Panc1 (cell line): ENCODE measurements at regions of chr17 and their contacts with region 1.

Region 1: DNA sequence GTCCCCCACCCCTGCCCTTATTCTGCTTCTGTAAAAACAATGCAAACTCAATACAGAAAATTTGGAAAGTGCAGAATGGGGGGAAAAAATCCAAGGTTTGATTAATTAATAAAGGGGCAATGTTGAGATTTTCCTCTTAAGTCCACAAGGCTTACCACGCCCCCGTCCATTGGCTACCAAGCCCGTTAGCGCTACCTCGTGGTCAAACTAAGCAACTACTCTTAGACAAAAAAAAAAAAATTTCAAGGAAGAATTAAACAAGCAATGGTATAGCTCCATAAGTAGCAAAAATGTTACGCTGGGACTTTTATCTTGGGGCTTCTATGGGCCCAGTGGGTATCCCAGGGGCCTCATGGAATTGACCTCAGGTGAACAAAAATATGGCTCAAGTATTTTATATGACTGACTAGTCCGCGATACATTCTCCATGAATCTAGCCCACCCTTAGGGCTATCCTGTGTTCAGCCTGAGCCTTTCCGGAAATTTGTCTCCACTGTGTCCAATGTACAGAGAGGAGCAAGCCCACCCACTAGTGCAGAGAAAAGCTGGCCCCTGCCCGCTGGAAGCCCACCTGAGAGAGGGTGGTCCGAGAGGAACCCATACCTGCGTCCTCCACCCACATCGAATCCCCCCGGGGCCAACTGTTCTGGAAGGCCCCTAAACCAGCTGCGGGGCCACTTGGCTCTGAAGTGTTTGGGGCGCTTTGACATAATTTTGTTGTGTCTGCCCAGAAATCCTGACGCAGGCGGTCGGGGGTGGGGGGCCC is 19.1 kb upstream of the TEX2 start:
- DNase-seq: no peak
- ATAC-seq: 0 out of 2 replicates have a peak, but pooled peaks have one; percentile 66
- H3K4me3 ChIP-seq: no peak overlapping the region
- H3K27ac ChIP-seq: no peak overlapping the region
- H3K4me1 ChIP-seq: no peaks in the 10 kb centered on the region
- H3K27me3 ChIP-seq: no peaks in the 10 kb centered on the region
- CTCF ChIP-seq: peak; percentile 83

Region 2: DNA sequence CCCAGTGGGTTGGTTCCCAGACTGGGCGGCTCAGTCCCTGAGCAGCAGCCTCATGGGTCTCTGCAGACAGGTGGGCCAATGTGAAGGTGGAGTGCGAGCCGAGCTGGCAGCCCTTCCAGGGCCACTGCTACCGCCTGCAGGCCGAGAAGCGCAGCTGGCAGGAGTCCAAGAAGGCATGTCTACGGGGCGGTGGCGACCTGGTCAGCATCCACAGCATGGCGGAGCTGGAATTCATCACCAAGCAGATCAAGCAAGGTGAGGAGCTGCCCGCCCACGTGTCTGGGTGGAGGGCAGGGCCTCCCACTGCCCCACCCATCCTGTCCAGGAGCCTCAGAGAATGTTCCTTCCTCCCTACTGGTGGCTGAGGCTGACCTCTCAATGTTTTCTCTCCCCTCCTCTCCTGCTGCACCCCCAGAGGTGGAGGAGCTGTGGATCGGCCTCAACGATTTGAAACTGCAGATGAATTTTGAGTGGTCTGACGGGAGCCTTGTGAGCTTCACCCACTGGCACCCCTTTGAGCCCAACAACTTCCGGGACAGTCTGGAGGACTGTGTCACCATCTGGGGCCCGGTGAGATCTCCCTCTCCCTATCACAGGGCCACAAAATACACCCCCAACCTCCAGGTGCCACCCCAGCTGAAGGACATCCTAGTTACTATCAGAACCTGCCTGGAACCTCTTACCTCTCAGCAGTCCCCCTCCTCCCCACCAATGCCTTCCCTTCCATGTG is 1610.4 kb before region 1 on chr17:
- CTCF ChIA-PET with region 1: interaction called, 14 read pairs
- POLR2A ChIA-PET with region 1: no interaction called
- in situ Hi-C with region 1: no loop called
- intact Hi-C with region 1: no loop called
- DNase-seq: no peak
- ATAC-seq: peak; percentile 30
- H3K4me3 ChIP-seq: no peak overlapping the region
- H3K27ac ChIP-seq: no peak overlapping the region
- H3K4me1 ChIP-seq: no peaks in the 10 kb centered on the region; the same call in 1 of the 2 replicates
- H3K27me3 ChIP-seq: no peaks in the 10 kb centered on the region
- CTCF ChIP-seq: no peak

Region 3: GRCh38 chr17:63516910-63517824 is 765.0 kb before region 1 on chr17:
- CTCF ChIA-PET with region 1: no interaction called
- POLR2A ChIA-PET with region 1: no interaction called
- in situ Hi-C with region 1: no loop called
- intact Hi-C with region 1: no loop called
- DNase-seq: no peak
- ATAC-seq: peak; percentile 47; the same call in 1 of the 2 replicates
- H3K4me3 ChIP-seq: no peak overlapping the region
- H3K27ac ChIP-seq: no peak overlapping the region
- H3K4me1 ChIP-seq: no peaks in the 10 kb centered on the region
- H3K27me3 ChIP-seq: peaks cover 4% of the 10 kb centered on the region; the same call in 1 of the 2 replicates
- CTCF ChIP-seq: no peak

Region 4: DNA sequence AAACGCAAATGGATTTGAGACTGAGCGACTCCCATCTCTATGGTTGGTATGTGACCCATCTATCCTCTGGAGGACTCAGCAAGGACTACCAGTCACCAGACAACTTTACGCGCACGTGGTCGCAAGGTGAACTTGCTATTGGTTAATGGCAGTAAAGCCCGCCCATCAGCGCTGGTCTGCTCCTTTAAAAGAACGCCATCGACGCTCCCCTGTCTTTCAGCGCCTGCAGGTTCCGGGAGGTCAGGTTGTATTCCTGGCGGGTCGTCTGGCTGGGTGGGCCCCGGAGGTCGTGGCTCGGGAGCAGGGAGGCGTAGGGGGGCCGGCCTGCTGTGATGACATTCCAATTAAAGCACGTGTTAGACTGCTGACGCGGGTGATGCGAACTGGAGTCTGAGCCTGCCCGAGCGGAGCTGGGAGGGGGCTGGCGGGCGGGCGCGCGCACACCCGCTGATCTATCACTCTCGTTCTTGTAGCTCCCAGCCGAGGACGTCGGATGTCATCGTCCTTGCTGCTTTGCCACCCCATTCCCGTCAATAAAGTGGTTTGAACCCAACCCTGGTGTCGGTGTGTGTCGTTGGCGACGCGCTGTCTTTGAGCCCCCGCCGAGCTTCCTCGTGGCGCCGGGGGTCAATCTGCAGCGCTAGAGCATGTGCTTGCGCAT is 136.3 kb before region 1 on chr17:
- CTCF ChIA-PET with region 1: interaction called, 6 read pairs
- POLR2A ChIA-PET with region 1: interaction called, 5 read pairs
- in situ Hi-C with region 1: no loop called
- intact Hi-C with region 1: loop called (anchors 5 kb)
- DNase-seq: peak; percentile 93
- ATAC-seq: peak; percentile 94
- H3K4me3 ChIP-seq: peak overlapping the region; percentile 76 to 87
- H3K27ac ChIP-seq: peak overlapping the region; percentile 93
- H3K4me1 ChIP-seq: peaks cover 10% of the 10 kb centered on the region
- H3K27me3 ChIP-seq: no peaks in the 10 kb centered on the region
- CTCF ChIP-seq: no peak

Region 5: GRCh38 chr17:64259922-64260321 is 22.2 kb before region 1 on chr17:
- CTCF ChIA-PET with region 1: no interaction called
- POLR2A ChIA-PET with region 1: no interaction called
- in situ Hi-C with region 1: no loop called
- intact Hi-C with region 1: no loop called
- DNase-seq: no peak
- ATAC-seq: no peak
- H3K4me3 ChIP-seq: no peak overlapping the region
- H3K27ac ChIP-seq: no peak overlapping the region
- H3K4me1 ChIP-seq: peaks cover 4% of the 10 kb centered on the region
- H3K27me3 ChIP-seq: no peaks in the 10 kb centered on the region
- CTCF ChIP-seq: no peak

Region 6: DNA sequence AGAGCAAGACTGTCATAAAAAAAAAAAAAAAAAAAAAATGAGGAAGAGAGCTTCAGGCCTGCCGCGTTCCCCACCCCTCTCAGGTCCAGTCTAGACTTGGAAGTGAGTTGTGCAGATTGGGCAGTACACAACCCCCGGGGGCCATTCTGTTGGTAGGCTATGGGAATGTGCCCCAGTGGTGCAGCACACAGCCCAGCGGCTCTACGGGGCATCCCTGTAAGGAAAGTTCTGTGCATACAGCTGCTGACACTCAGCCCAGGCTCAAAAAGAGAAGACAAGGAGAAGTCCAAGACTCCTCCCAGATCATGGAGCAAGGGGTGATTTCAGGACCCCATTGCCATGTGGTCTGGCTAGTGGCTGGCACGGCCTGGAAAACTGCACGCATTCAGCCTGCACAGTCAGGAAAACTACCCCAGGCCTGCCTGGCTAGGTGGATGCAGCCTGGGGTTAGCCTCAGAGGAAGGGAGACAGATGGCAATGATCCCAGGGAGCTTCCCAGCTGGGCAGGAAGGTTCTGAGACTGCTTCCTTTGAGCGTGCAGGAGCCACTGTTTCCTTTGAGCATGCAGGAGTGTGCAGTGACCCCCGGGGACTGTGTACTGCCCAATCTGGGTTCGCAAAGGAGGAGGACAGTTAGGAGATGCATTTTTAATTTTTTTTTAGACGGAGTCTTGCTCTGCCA is 63.7 kb after region 1 on chr17:
- CTCF ChIA-PET with region 1: no interaction called
- POLR2A ChIA-PET with region 1: no interaction called
- in situ Hi-C with region 1: no loop called
- intact Hi-C with region 1: no loop called
- DNase-seq: no peak
- ATAC-seq: no peak
- H3K4me3 ChIP-seq: no peak overlapping the region
- H3K27ac ChIP-seq: no peak overlapping the region
- H3K4me1 ChIP-seq: no peaks in the 10 kb centered on the region
- H3K27me3 ChIP-seq: no peaks in the 10 kb centered on the region
- CTCF ChIP-seq: no peak